OCI-LY7 (cell line): ENCODE measurements at regions of chr2 and their contacts with region 1.

Region 1: DNA sequence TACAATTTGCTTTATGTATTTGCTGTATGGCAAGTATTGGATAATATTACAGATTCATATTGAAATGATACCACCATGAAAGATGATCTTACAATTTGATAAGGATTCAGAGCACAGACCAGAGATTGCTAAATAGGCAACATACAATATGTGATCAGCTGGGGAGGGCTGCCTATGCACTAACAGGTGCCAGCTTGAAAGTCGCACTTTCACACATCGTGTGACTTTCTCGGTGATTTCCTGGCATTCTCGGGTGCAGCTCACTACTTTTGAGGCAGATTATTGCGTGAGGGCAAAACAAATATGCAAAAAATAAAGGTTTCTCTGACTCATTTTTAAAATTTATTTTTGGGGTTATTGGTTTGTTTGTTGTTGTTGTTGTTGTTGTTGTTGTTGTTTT is 36.0 kb downstream of the RBMS1 start:
- DNase-seq: no peak
- H3K4me3 ChIP-seq: no peak overlapping the region
- H3K27ac ChIP-seq: no peak overlapping the region
- H3K4me1 ChIP-seq: no peaks in the 10 kb centered on the region
- CTCF ChIP-seq: no peak

Region 2: DNA sequence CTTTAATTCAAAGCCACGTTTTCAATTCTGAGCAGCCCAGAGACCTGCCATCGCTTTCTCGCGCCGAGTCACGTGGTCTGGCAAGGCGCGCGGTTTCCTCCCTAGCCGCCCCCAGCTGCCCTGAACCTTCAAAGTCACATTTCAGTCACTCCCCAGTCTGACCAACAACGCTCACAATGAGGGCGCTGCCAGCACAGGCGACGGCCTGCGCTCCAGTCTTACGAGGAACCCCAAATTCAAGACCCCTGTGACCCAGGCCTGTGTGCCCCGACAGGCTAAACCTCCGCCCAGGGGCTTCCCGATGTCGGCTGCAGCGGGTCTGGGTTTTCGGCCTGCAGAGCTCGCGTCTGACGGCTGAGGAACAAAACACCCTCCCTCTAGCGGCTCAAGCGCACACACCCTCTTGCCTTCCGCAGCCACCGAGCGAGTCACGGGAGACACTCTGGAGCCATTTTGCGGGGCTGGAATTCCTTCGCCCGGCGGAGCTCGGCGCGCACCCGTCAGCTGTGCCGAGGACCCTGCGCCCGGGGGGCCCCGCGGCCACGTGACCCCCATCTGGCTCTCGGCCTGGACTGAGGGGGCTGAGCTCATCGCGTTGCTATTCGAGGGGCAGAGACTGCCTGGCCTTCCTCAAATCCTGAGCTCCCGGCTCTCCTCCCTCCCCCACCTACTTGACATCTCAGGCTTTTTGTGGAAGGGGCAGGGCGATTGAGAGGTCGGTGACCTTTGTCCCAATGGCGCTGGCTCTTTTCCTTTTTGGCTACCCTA is 187.6 kb before region 1 on chr2:
- CTCF ChIA-PET with region 1: no interaction called
- POLR2A ChIA-PET with region 1: no interaction called
- intact Hi-C with region 1: loop called (anchors 10 kb)
- DNase-seq: no peak
- H3K4me3 ChIP-seq: no peak overlapping the region
- H3K27ac ChIP-seq: no peak overlapping the region
- H3K4me1 ChIP-seq: no peaks in the 10 kb centered on the region
- CTCF ChIP-seq: no peak